A673 (cell line): ENCODE measurements at regions of chr2 and their contacts with region 1.

Region 1: DNA sequence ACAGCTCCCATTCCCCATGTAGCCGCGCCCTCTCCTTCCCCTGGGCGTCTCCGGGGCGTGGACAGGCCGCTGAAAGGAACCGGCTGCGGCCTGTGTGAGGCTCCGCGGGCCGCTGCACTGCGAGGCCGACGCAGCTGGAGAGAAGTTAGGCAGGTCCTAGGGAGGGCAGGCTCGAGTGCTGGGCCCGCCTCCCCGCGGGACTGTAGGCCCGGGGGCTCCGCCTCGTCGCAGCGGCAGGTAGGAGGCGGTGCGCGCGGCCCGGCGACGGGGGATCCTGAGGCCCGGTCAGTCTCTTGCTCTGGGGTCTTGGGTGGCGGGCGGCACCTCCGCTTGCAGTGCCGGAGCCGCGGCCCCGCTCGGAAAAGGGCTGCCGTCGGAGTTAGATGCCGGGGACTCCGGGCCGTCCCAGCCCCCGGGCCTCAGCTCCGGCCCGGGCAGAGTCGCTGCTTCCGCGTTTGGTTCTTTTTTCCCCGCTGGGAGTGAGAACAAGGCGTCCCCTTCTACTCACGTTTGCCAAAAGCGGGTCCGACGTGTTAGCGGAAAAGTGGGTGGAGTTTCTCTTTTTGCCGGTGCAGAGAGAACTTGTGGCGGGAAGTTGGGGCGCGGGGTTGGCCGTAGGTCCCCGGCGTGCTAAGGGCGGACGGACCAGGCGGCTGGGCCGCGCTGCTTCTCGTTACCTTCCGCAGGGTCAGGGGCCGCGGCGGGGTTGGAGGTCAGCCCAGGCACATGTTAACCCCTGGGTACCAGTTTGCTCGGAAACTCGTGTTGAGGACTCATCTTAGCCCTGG is at the start of gene VRK2:
- DNase-seq: peak; percentile 93
- H3K4me3 ChIP-seq: peak within 1 kb of the TSS; percentile 62
- H3K27ac ChIP-seq: peak within 1 kb of the TSS; percentile 79
- H3K4me1 ChIP-seq: peaks cover 11% of the 10 kb centered on the region
- H3K27me3 ChIP-seq: no peaks in the 10 kb centered on the region
- CTCF ChIP-seq: no peak
- total RNA-seq, gene VRK2: 15.4 and 16.1 TPM in 2 replicates

Region 2: DNA sequence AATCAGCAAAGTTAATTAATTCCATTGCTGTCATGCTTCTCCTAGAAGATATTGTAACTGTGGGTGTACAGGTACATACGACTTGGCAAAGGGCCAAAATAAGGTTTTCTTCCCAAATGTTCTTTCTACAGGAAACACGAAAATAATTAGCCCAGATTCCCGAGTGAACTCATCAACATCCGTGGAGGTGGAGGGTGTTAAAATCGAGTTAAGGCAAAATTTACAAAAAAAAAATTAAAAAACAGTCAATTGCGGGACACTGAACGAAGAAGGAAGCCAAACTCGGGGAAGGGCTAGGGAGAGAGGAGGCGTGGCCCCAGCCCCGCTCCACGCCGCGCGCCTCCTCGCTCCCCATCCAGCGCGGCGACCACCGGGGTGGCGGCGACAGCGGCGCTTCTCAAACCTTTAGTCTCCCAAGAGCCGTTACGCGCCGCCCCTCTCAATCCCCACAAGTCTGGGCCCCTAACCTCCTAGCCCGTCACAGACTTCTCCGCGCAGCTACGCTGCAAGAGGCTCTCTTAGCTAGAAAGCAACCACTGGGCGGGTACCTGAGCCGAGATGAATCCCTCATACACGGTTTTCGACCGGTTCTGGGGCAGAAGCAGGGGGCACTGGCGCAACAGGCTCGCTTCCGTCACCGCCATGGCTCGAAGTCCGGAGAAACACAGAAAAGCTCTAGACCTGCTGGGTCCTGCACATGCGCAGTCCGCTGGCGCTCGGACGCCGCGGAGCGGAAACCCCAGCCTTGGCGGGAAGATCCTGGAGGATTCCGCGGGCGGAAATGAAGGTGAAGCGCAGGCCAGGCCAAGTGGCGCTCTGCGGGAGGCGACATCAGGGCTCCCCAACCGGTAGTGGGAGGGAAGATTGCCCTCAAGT is 194.1 kb after region 1 on chr2 and contains the start of gene FANCL:
- CTCF ChIA-PET with region 1: no interaction called
- POLR2A ChIA-PET with region 1: no interaction called
- intact Hi-C with region 1: loop called (anchors 10 kb)
- DNase-seq: peak; percentile 92
- H3K4me3 ChIP-seq: peak within 1 kb of the TSS; percentile 77
- H3K27ac ChIP-seq: peak within 1 kb of the TSS; percentile 92
- H3K4me1 ChIP-seq: peaks cover 12% of the 10 kb centered on the region
- H3K27me3 ChIP-seq: no peaks in the 10 kb centered on the region
- CTCF ChIP-seq: no peak
- total RNA-seq, gene FANCL: 34.7 and 35.6 TPM in 2 replicates

Region 3: GRCh38 chr2:58289029-58289428 is 242.2 kb after region 1 on chr2:
- CTCF ChIA-PET with region 1: no interaction called
- POLR2A ChIA-PET with region 1: interaction called, 10 read pairs
- intact Hi-C with region 1: no loop called
- DNase-seq: no peak
- H3K4me3 ChIP-seq: no peak overlapping the region
- H3K27ac ChIP-seq: no peak overlapping the region
- H3K4me1 ChIP-seq: no peaks in the 10 kb centered on the region
- H3K27me3 ChIP-seq: no peaks in the 10 kb centered on the region
- CTCF ChIP-seq: no peak

Region 4: DNA sequence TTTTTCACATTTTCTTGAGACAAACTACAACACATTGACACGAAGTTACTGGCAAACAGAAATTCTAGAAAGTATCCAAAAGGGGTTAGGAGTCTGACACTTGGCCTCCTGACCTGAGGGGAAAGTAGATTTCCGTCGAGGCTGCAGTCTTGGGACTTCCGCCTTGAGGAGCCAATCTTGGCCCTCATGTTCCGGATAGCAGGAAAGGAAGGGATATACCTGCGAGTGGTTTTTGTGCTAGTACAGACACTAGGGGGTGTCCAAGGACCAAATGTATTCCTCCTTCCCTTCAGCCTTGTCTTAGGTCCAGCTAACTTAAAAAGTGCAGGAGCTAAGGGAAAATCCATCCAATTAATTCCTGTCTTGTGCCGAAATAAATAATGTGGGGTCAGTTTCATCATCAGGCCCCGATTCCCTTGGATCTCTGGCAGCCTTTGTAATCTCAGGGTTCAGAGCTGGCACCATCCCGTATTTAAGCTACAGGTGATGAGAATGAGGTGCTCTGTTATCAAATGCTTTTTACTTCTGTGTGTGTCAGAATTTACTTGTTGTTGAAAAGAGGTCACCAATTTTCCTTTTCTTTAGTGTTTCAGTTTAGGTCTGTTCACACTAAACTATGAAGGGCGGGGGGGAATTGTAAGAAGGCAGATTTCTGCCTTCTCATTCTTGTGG is 524.5 kb after region 1 on chr2:
- CTCF ChIA-PET with region 1: no interaction called
- POLR2A ChIA-PET with region 1: no interaction called
- intact Hi-C with region 1: loop called (anchors 10 kb)
- DNase-seq: peak; percentile 78
- H3K4me3 ChIP-seq: no peak overlapping the region
- H3K27ac ChIP-seq: no peak overlapping the region
- H3K4me1 ChIP-seq: peaks cover 7% of the 10 kb centered on the region
- H3K27me3 ChIP-seq: no peaks in the 10 kb centered on the region
- CTCF ChIP-seq: peak; percentile 76